ENCODE measurements at regions of chr11 and their contacts with region 1.

Region 1: DNA sequence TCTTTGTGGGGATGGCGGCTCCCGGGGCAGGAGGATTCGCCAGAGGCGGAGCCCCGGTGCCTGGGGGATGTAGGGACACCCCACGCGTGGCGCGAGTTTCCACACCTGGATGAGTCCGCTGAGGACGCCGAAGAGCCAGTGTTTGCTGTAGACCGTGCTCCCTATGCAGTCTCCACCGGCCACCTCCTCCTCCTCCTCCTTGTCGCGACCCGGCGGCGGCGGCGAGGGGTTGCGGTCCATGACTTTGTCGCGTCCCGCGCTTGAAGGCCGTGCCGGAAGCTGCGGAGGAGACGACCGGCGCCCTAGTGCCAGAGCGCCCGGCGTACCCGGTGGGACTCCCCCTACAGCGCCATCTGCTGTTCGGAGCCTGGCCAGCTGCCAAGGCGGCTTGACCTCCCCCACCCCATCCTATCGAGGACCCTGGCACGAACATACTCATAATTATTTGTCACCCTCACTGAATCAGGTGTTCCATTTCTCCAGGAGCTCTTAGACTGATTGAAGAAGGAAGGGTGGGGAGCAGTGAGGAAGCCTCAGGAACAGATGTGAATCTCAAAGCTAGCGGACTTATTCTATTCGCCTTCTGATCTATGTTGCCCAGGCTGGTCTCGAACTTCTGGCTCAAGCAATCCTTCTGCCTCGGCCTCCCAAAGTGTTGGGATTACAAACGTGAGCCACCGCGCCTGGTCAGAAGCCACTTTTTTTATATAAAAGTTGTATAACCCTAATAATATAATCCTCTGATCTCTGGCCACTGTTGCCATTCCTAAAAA is at the start of gene SAAL1:
- DNase-seq: peak; percentile 86
- H3K4me3 Mint-ChIP-seq: peak within 1 kb of the TSS; percentile 94
- H3K27ac Mint-ChIP-seq: peak within 1 kb of the TSS; percentile 88
- H3K4me1 Mint-ChIP-seq: peaks cover 33% of the 10 kb centered on the region
- H3K27me3 Mint-ChIP-seq: peaks cover 3% of the 10 kb centered on the region
- total RNA-seq, gene SAAL1: 42.5 and 42.9 TPM in 2 replicates

Region 2: DNA sequence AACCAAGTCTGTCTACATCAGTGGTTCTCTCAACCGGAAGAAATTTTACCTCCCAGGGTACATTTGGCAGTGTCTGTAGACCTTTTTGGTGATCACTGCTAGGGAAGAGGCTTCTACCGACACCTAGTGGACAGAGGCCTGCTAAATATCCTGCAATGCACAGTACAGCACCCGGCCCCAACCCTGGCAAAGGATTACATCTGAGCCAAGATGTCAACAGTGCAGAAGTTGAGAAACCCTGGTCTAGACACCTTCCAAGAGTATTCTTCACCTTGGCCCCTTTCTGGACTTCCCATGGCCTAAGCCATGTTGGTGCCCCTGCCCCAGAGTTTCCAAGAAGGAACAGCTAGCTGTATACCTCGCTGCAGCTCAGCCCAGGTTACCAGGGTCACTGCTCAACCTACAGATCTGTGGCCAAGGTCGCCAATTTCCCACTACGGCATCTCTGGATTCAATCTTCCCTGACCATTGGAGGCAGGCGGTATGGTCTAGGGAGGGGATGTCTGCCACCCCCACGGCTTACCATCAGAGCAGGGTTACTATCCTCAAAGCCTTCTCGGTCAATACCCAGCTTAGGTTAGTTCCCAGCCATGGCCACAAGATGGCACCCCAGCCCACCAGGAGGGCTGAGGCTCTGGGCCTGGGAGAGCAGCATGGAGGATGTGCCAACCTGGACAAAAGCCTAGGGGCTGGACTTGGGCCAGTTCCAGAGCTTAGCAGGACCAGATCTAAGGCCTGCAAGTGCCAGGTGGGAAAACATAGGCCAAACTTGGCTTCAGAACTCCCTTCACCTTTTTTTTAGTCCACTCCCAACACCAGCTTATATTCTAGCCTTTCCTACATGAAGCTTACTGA is 375.2 kb before region 1 on chr11:
- intact Hi-C with region 1: loop called (anchors 2 kb)
- DNase-seq: peak; percentile 48
- H3K4me3 Mint-ChIP-seq: no peak overlapping the region
- H3K27ac Mint-ChIP-seq: no peak overlapping the region
- H3K4me1 Mint-ChIP-seq: no peaks in the 10 kb centered on the region
- H3K27me3 Mint-ChIP-seq: peaks cover 49% of the 10 kb centered on the region

Region 3: GRCh38 chr11:17991783-17992433 is 114.1 kb before region 1 on chr11:
- intact Hi-C with region 1: loop called (anchors 1 kb)
- DNase-seq: peak; percentile 33
- H3K4me3 Mint-ChIP-seq: no peak overlapping the region
- H3K27ac Mint-ChIP-seq: no peak overlapping the region
- H3K4me1 Mint-ChIP-seq: no peaks in the 10 kb centered on the region
- H3K27me3 Mint-ChIP-seq: no peaks in the 10 kb centered on the region

Region 4: GRCh38 chr11:18012863-18013781 is 92.9 kb before region 1 on chr11 and contains the start of gene SERGEF:
- intact Hi-C with region 1: loop called (anchors 1 kb)
- DNase-seq: peak; percentile 92
- H3K4me3 Mint-ChIP-seq: peak within 1 kb of the TSS; percentile 97
- H3K27ac Mint-ChIP-seq: peak within 1 kb of the TSS; percentile 98
- H3K4me1 Mint-ChIP-seq: peaks cover 44% of the 10 kb centered on the region
- H3K27me3 Mint-ChIP-seq: peaks cover 5% of the 10 kb centered on the region
- total RNA-seq, gene SERGEF: 24.5 and 32.8 TPM in 2 replicates

Region 5: GRCh38 chr11:18253231-18253630 is 147.2 kb after region 1 on chr11:
- intact Hi-C with region 1: no loop called
- DNase-seq: no peak
- H3K4me3 Mint-ChIP-seq: no peak overlapping the region
- H3K27ac Mint-ChIP-seq: no peak overlapping the region
- H3K4me1 Mint-ChIP-seq: peaks cover 4% of the 10 kb centered on the region
- H3K27me3 Mint-ChIP-seq: peaks cover 13% of the 10 kb centered on the region

Region 6: GRCh38 chr11:18615628-18616392 is 509.8 kb after region 1 on chr11:
- intact Hi-C with region 1: loop called (anchors 10 kb)
- DNase-seq: no peak
- H3K4me3 Mint-ChIP-seq: peak overlapping the region; percentile 70
- H3K27ac Mint-ChIP-seq: peak overlapping the region; percentile 87
- H3K4me1 Mint-ChIP-seq: peaks cover 67% of the 10 kb centered on the region
- H3K27me3 Mint-ChIP-seq: no peaks in the 10 kb centered on the region

Region 7: GRCh38 chr11:18768472-18768901 is 662.5 kb after region 1 on chr11:
- intact Hi-C with region 1: loop called (anchors 2 kb)
- DNase-seq: no peak
- H3K4me3 Mint-ChIP-seq: no peak overlapping the region
- H3K27ac Mint-ChIP-seq: no peak overlapping the region
- H3K4me1 Mint-ChIP-seq: peaks cover 34% of the 10 kb centered on the region
- H3K27me3 Mint-ChIP-seq: peaks cover 6% of the 10 kb centered on the region